Adrenal gland (tissue), 19 donors: ENCODE measurements at regions of chr1 and their contacts with region 1.

Region 1: GRCh38 chr1:226990133-226990716 is 50.1 kb downstream of the COQ8A start:
- DNase-seq: peak; percentile 78 to 93 (median 90)
- H3K4me3 ChIP-seq: no peak overlapping the region
- H3K27ac ChIP-seq: peak overlapping the region; percentile 51 to 92 (median 76)
- H3K4me1 ChIP-seq: peaks cover 26 to 31% of the 10 kb centered on the region in 2 donors
- H3K27me3 ChIP-seq: no peaks in the 10 kb centered on the region
- CTCF ChIP-seq: no peak
- POLR2A ChIP-seq: peak in 1 of 2 donors; percentile 65

Region 2: DNA sequence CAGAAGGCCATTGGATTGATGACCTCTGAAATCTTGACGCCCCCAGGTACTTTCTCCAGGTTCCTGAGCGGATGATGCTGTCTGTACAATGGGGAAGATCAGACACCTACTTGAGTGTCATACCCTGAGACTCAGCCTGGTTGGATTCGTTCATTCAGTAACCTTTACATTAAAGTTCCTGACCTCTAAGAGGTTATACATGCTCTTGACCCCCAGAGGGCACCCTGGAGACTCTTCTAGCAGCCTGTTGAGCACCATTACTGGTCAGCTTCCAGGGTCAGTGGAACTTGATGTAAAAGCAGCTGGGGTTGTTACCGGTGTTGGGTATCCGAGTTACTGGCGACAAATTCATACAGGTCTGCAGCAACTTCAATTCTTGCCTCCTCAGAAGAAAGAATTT is 458.8 kb after region 1 on chr1:
- intact Hi-C with region 1: loop called in 1 of 2 experiments (anchors 10 kb)
- DNase-seq: peak in 2 of 7 donors; percentile 37 to 43
- H3K4me3 ChIP-seq: no peak overlapping the region
- H3K27ac ChIP-seq: no peak overlapping the region
- H3K4me1 ChIP-seq: no peaks in the 10 kb centered on the region
- H3K27me3 ChIP-seq: no peaks in the 10 kb centered on the region
- CTCF ChIP-seq: peak in 3 of 6 experiments; percentile 12 to 27 (median 17)
- POLR2A ChIP-seq: no peak